ENCODE measurements at regions of chrX and their contacts with region 1.

Region 1: GRCh38 chrX:19805046-19805690 is 82.2 kb downstream of the SH3KBP1 start:
- DNase-seq: no peak
- ATAC-seq: no peak; the same call in 2 of the 3 replicates
- H3K4me3 ChIP-seq: peak overlapping the region; percentile 12; the same call in 1 of the 2 replicates
- H3K27ac ChIP-seq: peak overlapping the region; percentile 48
- H3K4me1 ChIP-seq: peaks cover 32% of the 10 kb centered on the region
- H3K27me3 ChIP-seq: no peaks in the 10 kb centered on the region
- CTCF ChIP-seq: no peak
- EP300 ChIP-seq: no peak
- POLR2A ChIP-seq: no peak
- RAD21 ChIP-seq: no peak

Region 2: GRCh38 chrX:18886344-18887161 is 918.6 kb before region 1 on chrX:
- CTCF ChIA-PET with region 1: no interaction called
- POLR2A ChIA-PET with region 1: no interaction called
- RAD21 ChIA-PET with region 1: no interaction called
- SMC1A ChIA-PET with region 1: no interaction called
- in situ Hi-C with region 1: no loop called
- intact Hi-C with region 1: no loop called
- DNase-seq: peak; percentile 66
- ATAC-seq: peak; percentile 87
- H3K4me3 ChIP-seq: peak overlapping the region; percentile 47
- H3K27ac ChIP-seq: peak overlapping the region; percentile 87
- H3K4me1 ChIP-seq: peaks cover 28% of the 10 kb centered on the region
- H3K27me3 ChIP-seq: no peaks in the 10 kb centered on the region
- CTCF ChIP-seq: peak; percentile 62 to 70 (median 69)
- EP300 ChIP-seq: no peak
- POLR2A ChIP-seq: 0 out of 2 replicates have a peak, but pooled peaks have one; percentile 34
- RAD21 ChIP-seq: peak; percentile 66

Region 3: GRCh38 chrX:19791562-19791961 is 13.6 kb before region 1 on chrX:
- CTCF ChIA-PET with region 1: no interaction called
- POLR2A ChIA-PET with region 1: interaction called, 5 read pairs
- RAD21 ChIA-PET with region 1: interaction called, 10 read pairs
- SMC1A ChIA-PET with region 1: interaction called, 52 read pairs
- in situ Hi-C with region 1: no loop called
- intact Hi-C with region 1: no loop called
- DNase-seq: no peak
- ATAC-seq: peak; percentile 76
- H3K4me3 ChIP-seq: 0 out of 2 replicates have a peak overlapping the region, but pooled peaks have one; percentile 11
- H3K27ac ChIP-seq: peak overlapping the region; percentile 69
- H3K4me1 ChIP-seq: peaks cover 17% of the 10 kb centered on the region
- H3K27me3 ChIP-seq: no peaks in the 10 kb centered on the region
- CTCF ChIP-seq: no peak
- EP300 ChIP-seq: no peak
- POLR2A ChIP-seq: no peak
- RAD21 ChIP-seq: no peak

Region 4: DNA sequence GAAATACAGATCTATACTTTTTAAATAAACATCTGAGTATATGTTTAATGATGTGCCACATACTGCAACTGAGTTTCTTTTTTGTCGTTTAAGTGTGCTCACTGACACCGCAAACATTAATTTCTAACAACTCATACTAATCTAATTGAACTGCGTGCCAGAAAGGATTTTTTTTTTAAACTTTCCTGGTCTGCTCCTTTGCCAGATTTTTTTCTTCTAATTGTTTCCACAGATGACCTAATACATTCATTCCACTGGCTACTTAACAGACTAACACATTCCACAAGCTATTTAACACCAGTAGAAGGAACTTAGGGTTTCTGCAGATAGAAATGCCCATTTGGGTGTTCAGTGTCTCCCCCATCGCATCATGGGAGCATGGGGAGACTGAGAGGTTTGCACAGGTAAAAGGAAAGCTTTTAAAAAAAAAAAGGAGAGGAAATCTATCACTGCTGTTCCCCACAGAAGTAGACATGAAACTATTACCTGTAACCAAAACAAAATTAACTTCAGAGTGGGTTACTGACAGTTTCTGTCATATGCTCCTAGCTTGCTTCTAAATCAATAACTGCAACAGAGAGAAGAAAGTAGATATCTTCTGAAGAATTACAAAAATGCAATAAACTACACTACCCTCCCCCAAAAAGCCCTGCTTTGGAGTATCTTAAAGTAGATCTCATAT is 50.7 kb after region 1 on chrX:
- CTCF ChIA-PET with region 1: interaction called, 3 read pairs
- POLR2A ChIA-PET with region 1: interaction called, 12 read pairs
- RAD21 ChIA-PET with region 1: interaction called, 20 read pairs
- SMC1A ChIA-PET with region 1: interaction called, 12 read pairs
- in situ Hi-C with region 1: no loop called
- intact Hi-C with region 1: no loop called
- DNase-seq: no peak
- ATAC-seq: peak; percentile 36
- H3K4me3 ChIP-seq: no peak overlapping the region
- H3K27ac ChIP-seq: peak overlapping the region; percentile 88
- H3K4me1 ChIP-seq: peaks cover 21% of the 10 kb centered on the region
- H3K27me3 ChIP-seq: no peaks in the 10 kb centered on the region
- CTCF ChIP-seq: no peak
- EP300 ChIP-seq: no peak
- POLR2A ChIP-seq: no peak
- RAD21 ChIP-seq: no peak

Measured in GM12878 (cell line).